ENCODE measurements at regions of chr6 and their contacts with region 1.

Region 1: DNA sequence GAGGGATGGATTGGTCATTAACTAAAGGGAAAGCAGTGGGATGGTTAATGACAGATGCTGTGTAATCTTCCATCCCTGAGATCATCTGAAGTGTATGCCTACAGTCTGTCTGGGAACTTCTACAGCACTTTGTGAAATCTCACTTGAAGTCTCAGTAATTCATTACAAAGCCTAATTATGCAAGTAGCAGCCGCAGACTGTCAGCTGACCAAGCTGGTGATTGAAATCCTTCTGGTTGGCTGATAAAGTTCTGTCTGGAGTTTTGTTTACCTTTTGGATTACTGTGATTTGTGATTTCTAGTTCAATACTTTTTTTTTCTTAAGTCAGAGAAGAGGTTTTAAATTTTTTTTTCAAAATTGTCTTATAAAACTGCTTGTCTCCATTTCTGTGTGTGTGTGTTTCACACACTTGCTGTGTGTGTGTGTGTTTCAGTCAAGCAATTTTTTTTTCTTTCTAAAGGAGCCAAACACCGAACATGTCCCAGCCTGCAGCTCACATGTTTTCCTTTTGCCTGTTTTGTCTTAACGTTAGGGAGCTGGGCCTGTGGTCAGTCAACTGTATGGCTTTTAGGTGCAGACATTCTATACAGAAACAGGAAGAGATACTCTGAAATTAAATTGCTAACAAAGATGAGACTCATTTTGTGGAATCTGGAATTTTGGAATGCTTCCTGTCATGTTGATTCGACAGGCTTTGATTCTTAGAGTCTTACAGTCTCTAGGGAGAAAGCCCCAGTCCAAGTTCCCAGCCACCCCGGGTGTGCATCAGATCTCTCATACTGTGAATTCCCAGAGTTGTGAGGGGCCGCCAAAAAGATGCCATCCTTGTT is 28.5 kb upstream of the ADGRF4 start:
- DNase-seq: peak in 1 of 2 experiments; percentile 47
- H3K4me3 ChIP-seq: no peak overlapping the region
- H3K4me3 Mint-ChIP-seq: peak overlapping the region; percentile 64
- H3K27ac Mint-ChIP-seq: peak overlapping the region; percentile 74
- H3K4me1 ChIP-seq: peaks cover 15% of the 10 kb centered on the region
- H3K4me1 Mint-ChIP-seq: peaks cover 9% of the 10 kb centered on the region
- H3K27me3 ChIP-seq: no peaks in the 10 kb centered on the region
- H3K27me3 Mint-ChIP-seq: no peaks in the 10 kb centered on the region
- CTCF ChIP-seq: no peak

Region 2: GRCh38 chr6:47680051-47680450 is 10.2 kb after region 1 on chr6:
- CTCF ChIA-PET with region 1: no interaction called
- POLR2A ChIA-PET with region 1: no interaction called
- intact Hi-C with region 1: loop called (anchors 1 kb)
- DNase-seq: peak in 1 of 2 experiments; percentile 23
- H3K4me3 ChIP-seq: no peak overlapping the region
- H3K4me3 Mint-ChIP-seq: no peak overlapping the region
- H3K27ac Mint-ChIP-seq: no peak overlapping the region
- H3K4me1 ChIP-seq: no peaks in the 10 kb centered on the region
- H3K4me1 Mint-ChIP-seq: peaks cover 7% of the 10 kb centered on the region
- H3K27me3 ChIP-seq: no peaks in the 10 kb centered on the region
- H3K27me3 Mint-ChIP-seq: no peaks in the 10 kb centered on the region
- CTCF ChIP-seq: no peak

Measured in Caco-2 (cell line).